ENCODE measurements at regions of chrX and their contacts with region 1.

Region 1: DNA sequence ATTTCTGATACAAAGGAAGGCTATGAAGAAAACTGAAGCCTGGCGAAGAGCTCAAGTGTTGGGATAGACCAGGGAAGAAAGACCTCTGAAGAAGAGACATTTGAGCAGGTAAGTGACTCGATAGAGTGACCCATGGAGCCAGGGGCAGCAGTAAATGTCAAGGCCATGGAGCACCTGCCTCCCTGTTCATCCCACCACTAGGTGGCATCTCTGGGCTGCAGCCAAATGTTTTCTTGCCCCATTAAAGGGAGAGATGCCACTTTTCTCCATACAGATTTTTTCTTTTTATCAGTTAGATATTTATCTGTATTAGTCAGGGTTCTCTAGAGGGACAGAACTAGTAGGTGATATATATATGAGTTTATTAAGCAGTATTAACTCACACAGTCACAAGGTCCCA is 4.9 kb upstream of the ZNF81 start:
- DNase-seq: peak in 1 of 2 experiments; percentile 52
- H3K4me3 ChIP-seq: no peak overlapping the region
- H3K27ac ChIP-seq: no peak overlapping the region
- H3K4me1 ChIP-seq: peaks cover 0 to 3% (median 0%) of the 10 kb centered on the region in 4 experiments; a peak in 1 of 7 replicates
- H3K27me3 ChIP-seq: no peaks in the 10 kb centered on the region
- CTCF ChIP-seq: peak; percentile 65 to 77 (median 70)
- EP300 ChIP-seq: no peak
- POLR2A ChIP-seq: no peak
- RAD21 ChIP-seq: peak; percentile 61 to 71

Region 2: DNA sequence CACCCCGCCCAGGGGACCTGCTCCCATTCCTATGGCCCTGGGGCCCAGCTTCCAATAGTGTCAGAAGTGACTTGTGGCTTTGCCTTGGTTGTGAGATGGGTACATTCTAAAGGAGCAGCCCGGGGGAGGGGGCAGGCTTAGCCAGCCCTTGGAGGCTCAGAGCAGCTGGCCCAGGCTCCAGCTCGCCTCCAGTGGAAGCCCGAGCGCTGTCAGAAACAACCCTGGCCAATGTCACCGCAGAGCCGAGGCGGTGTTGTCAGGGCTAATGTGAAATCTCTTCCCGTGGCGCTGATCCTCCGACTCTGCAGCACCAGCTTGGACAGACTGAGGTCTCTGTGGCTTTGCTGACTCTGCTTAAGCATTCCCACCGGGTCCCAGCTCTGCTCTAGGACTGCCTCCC is 24.2 kb before region 1 on chrX:
- CTCF ChIA-PET with region 1: interaction called, 15 read pairs
- POLR2A ChIA-PET with region 1: interaction called, 4 read pairs
- DNase-seq: peak in 1 of 2 experiments; percentile 44
- H3K4me3 ChIP-seq: no peak overlapping the region
- H3K27ac ChIP-seq: no peak overlapping the region
- H3K4me1 ChIP-seq: peaks cover 0 to 7% (median 4%) of the 10 kb centered on the region in 4 experiments; a peak in 2 of 7 replicates
- H3K27me3 ChIP-seq: no peaks in the 10 kb centered on the region
- CTCF ChIP-seq: no peak
- EP300 ChIP-seq: no peak
- POLR2A ChIP-seq: no peak
- RAD21 ChIP-seq: no peak

Region 3: DNA sequence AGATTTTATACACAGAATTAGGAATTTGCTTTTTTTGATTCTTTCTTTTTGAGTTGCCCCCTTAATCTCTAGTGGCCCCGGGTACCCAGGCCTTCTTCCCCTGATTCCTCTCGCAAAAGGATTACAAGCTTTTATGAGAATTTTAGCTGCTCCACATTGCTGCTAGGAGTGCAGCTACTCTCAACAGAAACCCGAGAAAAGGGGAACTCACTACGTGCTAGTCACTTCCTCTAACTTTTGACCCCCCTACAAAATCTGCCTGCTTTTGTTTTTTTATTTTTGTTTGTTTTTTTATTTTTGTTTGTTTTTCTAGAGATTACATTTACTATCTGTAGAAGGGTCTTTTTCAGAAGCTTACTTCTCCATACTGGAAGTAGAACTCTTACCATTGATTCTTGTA is 69.0 kb after region 1 on chrX:
- CTCF ChIA-PET with region 1: no interaction called
- POLR2A ChIA-PET with region 1: no interaction called
- DNase-seq: no peak
- H3K4me3 ChIP-seq: no peak overlapping the region
- H3K27ac ChIP-seq: no peak overlapping the region
- H3K4me1 ChIP-seq: no peaks in the 10 kb centered on the region
- H3K27me3 ChIP-seq: no peaks in the 10 kb centered on the region
- CTCF ChIP-seq: no peak
- EP300 ChIP-seq: no peak
- POLR2A ChIP-seq: no peak
- RAD21 ChIP-seq: no peak

Region 4: DNA sequence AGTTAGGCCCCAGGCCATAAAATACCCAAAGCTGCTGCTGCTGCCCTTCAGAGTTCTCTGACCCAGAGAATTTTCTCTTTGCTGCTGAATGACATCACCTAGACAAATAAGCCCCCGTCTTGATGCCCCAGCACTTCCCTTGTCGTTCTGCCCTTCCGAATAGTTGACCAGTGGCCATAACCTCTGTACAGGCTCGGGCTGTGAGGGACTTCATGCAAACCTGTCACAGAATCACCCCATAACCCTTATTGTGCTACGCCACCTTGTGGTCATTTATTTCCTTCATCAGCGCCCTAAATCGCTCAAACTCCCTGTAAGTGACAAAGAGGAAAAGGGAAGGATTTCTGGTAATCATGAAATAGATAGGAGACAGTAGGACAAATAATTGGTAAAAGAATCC is 193.8 kb after region 1 on chrX:
- CTCF ChIA-PET with region 1: interaction called, 19 read pairs
- POLR2A ChIA-PET with region 1: no interaction called
- DNase-seq: peak in 1 of 2 experiments; percentile 50
- H3K4me3 ChIP-seq: no peak overlapping the region
- H3K27ac ChIP-seq: no peak overlapping the region
- H3K4me1 ChIP-seq: no peaks in the 10 kb centered on the region
- H3K27me3 ChIP-seq: no peaks in the 10 kb centered on the region
- CTCF ChIP-seq: peak in 2 of 3 experiments; percentile 59 to 63; a peak in 3 of 4 replicates
- EP300 ChIP-seq: no peak
- POLR2A ChIP-seq: no peak
- RAD21 ChIP-seq: peak; percentile 70 to 78